Activated CD8-positive, alpha-beta T cell treated with anti-CD3 and anti-CD28 coated beads for 36 hours (primary cell): ENCODE measurements at regions of chr1 and their contacts with region 1.

Region 1: GRCh38 chr1:40385437-40386358 is 12.2 kb downstream of the SMAP2 start:
- DNase-seq: peak; percentile 85
- ATAC-seq: peak; percentile 67
- H3K4me3 Mint-ChIP-seq: peak overlapping the region; percentile 78
- H3K27ac Mint-ChIP-seq: peak overlapping the region; percentile 99
- H3K4me1 Mint-ChIP-seq: peaks cover 78% of the 10 kb centered on the region
- H3K27me3 Mint-ChIP-seq: no peaks in the 10 kb centered on the region
- CTCF ChIP-seq: no peak

Region 2: DNA sequence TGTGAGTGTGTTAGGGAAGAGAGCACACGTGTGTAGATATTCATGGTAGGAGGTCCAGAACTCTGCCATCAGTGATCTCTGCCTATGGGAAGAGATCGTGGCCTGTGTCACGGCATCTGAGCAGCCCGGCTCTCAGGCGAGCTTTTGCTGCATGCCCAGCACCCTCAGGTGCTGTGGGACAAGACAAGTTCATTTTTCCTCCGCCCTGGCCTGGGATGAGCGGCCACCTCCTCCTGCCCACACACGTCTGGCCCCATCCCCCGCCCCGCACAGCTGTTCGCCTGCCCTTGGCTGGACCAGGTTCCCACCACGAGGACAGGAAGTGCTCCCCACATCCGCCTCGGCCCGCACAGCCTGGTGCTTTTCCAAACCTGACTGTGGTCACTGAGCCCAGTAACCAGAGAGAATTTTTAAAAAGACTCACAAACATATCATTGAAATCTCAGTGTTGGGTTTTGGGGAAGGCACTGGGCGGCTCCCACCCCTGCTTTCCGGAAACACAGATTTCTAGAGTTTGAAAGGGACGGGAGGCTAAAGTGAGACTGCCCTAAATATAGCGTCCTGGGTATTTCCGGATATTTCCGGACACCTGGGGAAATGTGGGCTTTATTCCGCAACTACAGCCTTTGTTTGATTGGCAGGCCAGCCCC is 876.2 kb before region 1 on chr1:
- CTCF ChIA-PET with region 1: no interaction called
- POLR2A ChIA-PET with region 1: no interaction called
- intact Hi-C with region 1: no loop called
- DNase-seq: peak; percentile 43
- ATAC-seq: peak; percentile 6
- H3K4me3 Mint-ChIP-seq: peak overlapping the region; percentile 22
- H3K27ac Mint-ChIP-seq: peak overlapping the region; percentile 68
- H3K4me1 Mint-ChIP-seq: peaks cover 10% of the 10 kb centered on the region
- H3K27me3 Mint-ChIP-seq: peaks cover 3% of the 10 kb centered on the region
- CTCF ChIP-seq: no peak

Region 3: GRCh38 chr1:40232444-40232843 is 153.3 kb before region 1 on chr1:
- CTCF ChIA-PET with region 1: no interaction called
- POLR2A ChIA-PET with region 1: no interaction called
- intact Hi-C with region 1: no loop called
- DNase-seq: peak; percentile 88
- ATAC-seq: peak; percentile 91
- H3K4me3 Mint-ChIP-seq: no peak overlapping the region
- H3K27ac Mint-ChIP-seq: peak overlapping the region; percentile 28
- H3K4me1 Mint-ChIP-seq: peaks cover 32% of the 10 kb centered on the region
- H3K27me3 Mint-ChIP-seq: no peaks in the 10 kb centered on the region
- CTCF ChIP-seq: no peak

Region 4: DNA sequence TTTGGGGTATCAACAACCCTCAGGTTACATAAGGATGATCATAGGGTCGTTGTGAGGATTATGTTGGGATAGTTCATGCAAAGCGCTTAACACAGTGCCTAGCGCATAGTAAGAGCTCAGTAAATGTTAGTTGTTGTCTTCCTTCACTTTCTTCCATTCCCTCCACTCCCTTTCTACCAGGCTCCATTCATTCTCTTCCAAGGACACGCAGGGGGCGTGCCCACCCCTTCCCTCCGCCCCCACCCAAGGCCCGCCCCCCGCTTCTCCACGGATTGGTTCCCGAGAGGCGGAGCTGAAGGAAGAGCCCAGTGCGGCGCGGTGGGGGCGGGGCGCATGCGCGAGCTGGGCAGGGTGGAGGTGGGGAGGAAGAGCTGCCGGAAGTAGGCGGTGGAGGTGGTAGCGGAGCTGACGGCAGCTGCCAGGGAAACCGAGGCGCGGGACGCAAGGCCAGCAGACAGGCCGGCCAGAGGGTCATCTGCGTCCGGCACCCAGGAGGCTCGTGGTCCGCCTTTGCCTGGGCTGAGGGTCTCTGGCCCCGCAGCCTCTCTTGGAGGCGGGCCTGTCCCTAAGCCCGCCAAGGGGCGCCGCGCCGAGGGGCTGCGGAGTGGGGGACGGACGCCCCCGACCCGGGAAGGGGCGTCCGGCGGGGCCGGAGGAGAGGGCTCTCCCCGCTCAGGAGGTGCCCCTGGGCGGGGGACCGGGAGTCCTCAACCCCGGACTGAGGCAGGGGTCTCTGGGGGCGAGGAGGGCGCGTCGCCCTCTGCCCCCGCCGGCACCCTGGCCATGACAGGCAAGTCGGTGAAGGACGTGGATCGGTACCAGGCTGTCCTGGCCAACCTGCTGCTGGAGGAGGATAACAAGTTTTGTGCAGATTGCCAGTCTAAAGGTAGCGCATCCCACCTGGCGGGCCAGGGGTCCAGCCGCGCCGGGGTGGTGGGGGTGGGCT is 12.1 kb before region 1 on chr1 and contains the start of gene SMAP2:
- CTCF ChIA-PET with region 1: interaction called, 32 read pairs
- POLR2A ChIA-PET with region 1: interaction called, 278 read pairs
- intact Hi-C with region 1: no loop called
- DNase-seq: peak; percentile 96
- ATAC-seq: peak; percentile 89
- H3K4me3 Mint-ChIP-seq: peak within 1 kb of the TSS; percentile 97
- H3K27ac Mint-ChIP-seq: peak within 1 kb of the TSS; percentile 98
- H3K4me1 Mint-ChIP-seq: peaks cover 41% of the 10 kb centered on the region
- H3K27me3 Mint-ChIP-seq: no peaks in the 10 kb centered on the region
- CTCF ChIP-seq: no peak
- total RNA-seq, gene SMAP2: 204 to 209 TPM

Region 5: DNA sequence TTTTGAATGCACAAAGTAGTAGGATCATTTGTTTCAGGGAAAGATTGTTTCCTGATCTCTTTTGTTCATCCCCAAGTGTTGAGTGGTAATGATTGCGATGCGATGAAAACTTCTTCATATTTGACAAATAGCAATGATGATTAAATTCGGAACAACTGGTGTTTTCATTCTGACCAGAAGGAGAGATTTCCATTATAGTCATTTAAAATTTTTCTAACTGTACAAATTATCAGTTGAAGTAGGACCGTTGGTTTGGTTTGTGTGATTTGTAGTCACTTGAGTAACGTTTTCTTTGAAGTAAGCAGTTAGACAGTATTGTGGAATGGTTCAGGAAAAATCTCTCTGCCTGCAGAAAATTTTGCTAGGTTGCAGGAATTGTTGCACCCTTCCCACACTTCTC is 311.7 kb after region 1 on chr1:
- CTCF ChIA-PET with region 1: no interaction called
- POLR2A ChIA-PET with region 1: no interaction called
- intact Hi-C with region 1: no loop called
- DNase-seq: no peak
- ATAC-seq: no peak
- H3K4me3 Mint-ChIP-seq: no peak overlapping the region
- H3K27ac Mint-ChIP-seq: no peak overlapping the region
- H3K4me1 Mint-ChIP-seq: peaks cover 72% of the 10 kb centered on the region
- H3K27me3 Mint-ChIP-seq: no peaks in the 10 kb centered on the region
- CTCF ChIP-seq: no peak